Transverse colon (tissue), 4 donors: ENCODE measurements at regions of chr10 and their contacts with region 1.

Region 1: GRCh38 chr10:127853868-127854768 is 38.6 kb downstream of the CLRN3 start:
- DNase-seq: peak; percentile 59
- H3K4me3 ChIP-seq: no peak overlapping the region
- H3K27ac ChIP-seq: no peak overlapping the region
- H3K4me1 ChIP-seq: peaks cover 0 to 7% (median 2%) of the 10 kb centered on the region in 4 donors
- H3K27me3 ChIP-seq: peaks cover 5% of the 10 kb centered on the region
- CTCF ChIP-seq: peak; percentile 75 to 85 (median 82)
- EP300 ChIP-seq: no peak
- POLR2A ChIP-seq: no peak

Region 2: GRCh38 chr10:126876436-126876835 is 977.7 kb before region 1 on chr10:
- in situ Hi-C with region 1: no loop called
- intact Hi-C with region 1: loop called (anchors 2 kb)
- DNase-seq: no peak
- H3K4me3 ChIP-seq: no peak overlapping the region
- H3K27ac ChIP-seq: no peak overlapping the region
- H3K4me1 ChIP-seq: no peaks in the 10 kb centered on the region
- H3K27me3 ChIP-seq: peaks cover 8% of the 10 kb centered on the region
- CTCF ChIP-seq: no peak
- EP300 ChIP-seq: no peak
- POLR2A ChIP-seq: no peak

Region 3: DNA sequence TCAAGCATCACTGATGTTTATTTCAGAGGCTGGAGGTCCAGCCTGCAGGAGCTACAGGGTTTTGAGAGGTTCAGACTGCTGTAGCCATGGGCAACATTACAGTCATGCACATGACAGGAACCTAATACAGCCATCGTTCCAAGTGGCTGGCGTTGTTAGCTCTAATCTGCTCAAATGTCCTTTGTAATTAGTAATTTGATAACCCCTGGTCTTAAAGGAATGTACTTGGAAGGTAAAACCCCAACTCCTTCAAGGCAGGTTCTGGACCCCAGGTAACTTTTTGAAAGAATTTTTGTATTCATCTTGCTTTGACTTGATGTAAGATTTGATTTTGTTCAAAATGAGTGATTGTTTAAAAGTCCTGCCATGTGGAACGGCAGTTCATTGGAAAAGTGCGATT is 151.8 kb before region 1 on chr10:
- in situ Hi-C with region 1: no loop called
- intact Hi-C with region 1: no loop called
- DNase-seq: no peak
- H3K4me3 ChIP-seq: no peak overlapping the region
- H3K27ac ChIP-seq: no peak overlapping the region
- H3K4me1 ChIP-seq: no peaks in the 10 kb centered on the region
- H3K27me3 ChIP-seq: peaks cover 12% of the 10 kb centered on the region
- CTCF ChIP-seq: no peak
- EP300 ChIP-seq: no peak
- POLR2A ChIP-seq: no peak

Region 4: DNA sequence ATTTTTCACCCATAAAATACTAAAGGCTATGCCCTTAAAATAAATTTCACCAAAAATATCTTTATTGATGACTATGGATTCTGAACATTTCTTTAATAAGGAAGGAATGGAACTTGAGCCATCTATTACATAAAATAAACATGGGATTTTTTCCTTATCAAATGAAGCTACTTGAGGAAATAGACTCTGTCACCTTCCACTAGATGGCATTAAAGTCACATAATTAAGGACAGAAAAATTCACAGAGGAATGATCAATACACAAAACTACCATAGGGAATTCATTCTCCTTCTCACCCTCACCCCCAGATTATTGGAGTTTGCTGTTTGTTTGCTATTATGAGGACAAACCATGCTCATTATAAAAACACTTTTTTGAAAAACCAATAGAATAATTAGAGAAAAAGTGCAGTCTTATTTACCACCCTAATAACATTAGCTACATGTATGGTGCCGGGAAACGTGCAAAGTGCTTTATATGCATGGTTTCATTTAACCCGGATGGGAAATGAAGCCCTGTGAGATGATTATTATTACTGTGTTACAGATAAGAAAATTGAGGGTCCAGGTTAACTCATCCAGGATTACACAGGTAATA is 138.2 kb before region 1 on chr10:
- in situ Hi-C with region 1: loop called in 2 of 4 experiments (anchors 10 kb)
- intact Hi-C with region 1: no loop called
- DNase-seq: no peak
- H3K4me3 ChIP-seq: no peak overlapping the region
- H3K27ac ChIP-seq: no peak overlapping the region
- H3K4me1 ChIP-seq: no peaks in the 10 kb centered on the region
- H3K27me3 ChIP-seq: no peaks in the 10 kb centered on the region
- CTCF ChIP-seq: peak; percentile 16 to 40 (median 36)
- EP300 ChIP-seq: no peak
- POLR2A ChIP-seq: no peak

Region 5: DNA sequence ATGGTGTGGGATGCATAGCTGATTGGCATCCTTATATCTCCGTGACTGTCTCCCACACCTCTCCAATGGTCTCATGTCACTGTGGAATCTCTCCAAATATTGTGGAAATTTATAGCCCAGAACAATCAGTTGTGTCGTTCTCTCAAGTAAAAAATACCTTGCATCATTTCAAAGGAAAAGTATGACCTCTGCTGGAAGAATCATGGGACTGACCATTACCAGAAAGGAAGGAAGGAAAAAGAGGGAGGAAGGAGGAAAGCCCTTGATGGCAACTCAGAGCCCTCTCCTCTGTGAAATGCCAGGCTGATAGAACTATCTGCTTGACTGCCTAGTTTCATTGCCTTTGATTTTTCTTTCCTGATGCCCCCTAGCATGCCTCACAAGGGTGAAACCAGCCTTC is 40.8 kb before region 1 on chr10:
- in situ Hi-C with region 1: no loop called
- intact Hi-C with region 1: no loop called
- DNase-seq: no peak
- H3K4me3 ChIP-seq: no peak overlapping the region
- H3K27ac ChIP-seq: no peak overlapping the region
- H3K4me1 ChIP-seq: no peaks in the 10 kb centered on the region
- H3K27me3 ChIP-seq: no peaks in the 10 kb centered on the region
- CTCF ChIP-seq: peak in 1 of 5 experiments; percentile 21
- EP300 ChIP-seq: no peak
- POLR2A ChIP-seq: no peak